Activated B cell treated with CpG ODN at 0.5 μM for 24 hours (primary cell): ENCODE measurements at regions of chr4 and their contacts with region 1.

Region 1: DNA sequence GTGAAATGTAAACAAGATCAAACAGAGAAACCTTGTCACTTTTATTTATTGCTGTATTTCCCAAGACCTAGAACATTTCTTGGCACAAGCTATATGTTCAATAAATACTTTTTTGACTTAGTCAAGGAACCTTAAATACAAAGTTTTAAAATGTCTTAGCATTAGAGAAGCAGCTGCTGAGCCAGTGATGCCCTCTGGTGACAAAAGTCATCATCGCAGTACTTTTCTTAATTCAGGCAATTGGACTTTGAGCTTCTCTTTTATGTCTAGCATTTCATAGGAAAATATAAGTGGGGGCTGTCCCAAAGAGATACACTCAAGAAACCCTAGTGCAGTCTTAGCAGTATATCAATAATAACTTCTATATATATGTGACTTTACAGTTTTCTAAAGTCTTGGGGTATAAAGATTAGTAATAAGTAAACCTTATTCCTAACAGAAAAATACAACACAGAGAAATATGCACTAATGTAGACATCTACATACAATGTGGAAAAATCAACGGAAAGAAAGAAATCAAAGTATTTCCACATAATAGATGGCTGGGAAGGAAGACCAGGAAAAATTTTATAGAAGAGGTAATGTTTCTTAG is 118.4 kb downstream of the DTHD1 start:
- DNase-seq: no peak
- ATAC-seq: peak; percentile 37
- H3K4me3 Mint-ChIP-seq: no peak overlapping the region
- H3K27ac Mint-ChIP-seq: no peak overlapping the region
- H3K4me1 Mint-ChIP-seq: no peaks in the 10 kb centered on the region
- H3K27me3 Mint-ChIP-seq: no peaks in the 10 kb centered on the region
- CTCF ChIP-seq: peak; percentile 87

Region 2: DNA sequence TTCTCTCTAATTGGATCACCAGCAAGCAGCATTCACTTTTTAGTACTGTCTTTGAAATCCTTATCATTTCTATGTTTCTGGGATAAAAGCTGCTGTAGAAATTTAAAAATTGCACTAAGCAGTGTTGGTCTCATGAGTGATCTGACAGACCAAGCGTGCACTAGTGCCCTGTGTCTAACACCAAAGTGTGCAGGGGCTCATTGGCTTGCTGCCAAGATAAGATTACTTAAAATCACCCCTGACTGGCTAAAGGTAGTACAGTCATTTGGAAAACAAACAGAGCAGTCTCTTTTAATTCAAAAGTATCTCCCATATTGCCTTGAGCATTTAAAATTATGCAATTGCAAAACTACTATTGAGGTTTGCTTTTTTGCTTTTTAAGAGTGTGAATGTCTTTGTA is 460.1 kb before region 1 on chr4:
- CTCF ChIA-PET with region 1: no interaction called
- POLR2A ChIA-PET with region 1: no interaction called
- intact Hi-C with region 1: loop called (anchors 10 kb)
- DNase-seq: no peak
- ATAC-seq: no peak
- H3K4me3 Mint-ChIP-seq: no peak overlapping the region
- H3K27ac Mint-ChIP-seq: no peak overlapping the region
- H3K4me1 Mint-ChIP-seq: no peaks in the 10 kb centered on the region
- H3K27me3 Mint-ChIP-seq: no peaks in the 10 kb centered on the region
- CTCF ChIP-seq: no peak

Region 3: GRCh38 chr4:36187723-36188333 is 212.0 kb before region 1 on chr4:
- CTCF ChIA-PET with region 1: interaction called, 40 read pairs
- POLR2A ChIA-PET with region 1: no interaction called
- intact Hi-C with region 1: loop called (anchors 1 kb)
- DNase-seq: no peak
- ATAC-seq: no peak
- H3K4me3 Mint-ChIP-seq: no peak overlapping the region
- H3K27ac Mint-ChIP-seq: no peak overlapping the region
- H3K4me1 Mint-ChIP-seq: peaks cover 23% of the 10 kb centered on the region
- H3K27me3 Mint-ChIP-seq: no peaks in the 10 kb centered on the region
- CTCF ChIP-seq: no peak

Region 4: GRCh38 chr4:36255577-36255976 is 144.3 kb before region 1 on chr4:
- CTCF ChIA-PET with region 1: interaction called, 12 read pairs
- POLR2A ChIA-PET with region 1: no interaction called
- intact Hi-C with region 1: no loop called
- DNase-seq: no peak
- ATAC-seq: peak; percentile 90
- H3K4me3 Mint-ChIP-seq: peak overlapping the region; percentile 81
- H3K27ac Mint-ChIP-seq: peak overlapping the region; percentile 95
- H3K4me1 Mint-ChIP-seq: peaks cover 32% of the 10 kb centered on the region
- H3K27me3 Mint-ChIP-seq: no peaks in the 10 kb centered on the region
- CTCF ChIP-seq: no peak

Region 5: DNA sequence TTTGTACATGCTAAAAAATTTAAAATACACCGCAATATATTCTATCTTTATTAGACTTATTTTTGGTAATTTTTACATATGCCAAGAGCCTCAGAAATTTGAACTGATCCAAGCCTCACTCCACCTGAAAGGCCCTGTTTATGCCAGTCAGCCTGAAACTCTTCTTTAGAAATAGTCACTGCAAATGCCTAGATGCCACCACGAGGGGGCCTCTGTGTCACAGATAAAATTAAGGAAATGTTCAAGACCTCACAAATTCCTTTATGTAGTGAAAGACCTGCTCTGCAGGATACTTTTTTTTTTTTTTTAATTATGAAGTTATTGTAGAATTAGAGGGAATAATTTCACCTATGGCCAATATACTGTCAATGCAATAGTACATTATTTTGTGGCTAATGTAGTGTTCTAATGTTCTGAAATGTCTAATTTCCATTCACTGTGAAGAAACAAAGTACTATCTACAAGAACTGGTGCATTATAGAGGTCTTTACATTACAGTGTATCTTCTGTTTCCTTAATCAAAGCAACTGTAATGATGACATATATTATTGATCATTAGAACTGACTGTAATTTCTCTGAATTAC is 48.7 kb before region 1 on chr4:
- CTCF ChIA-PET with region 1: interaction called, 49 read pairs
- POLR2A ChIA-PET with region 1: no interaction called
- intact Hi-C with region 1: loop called (anchors 1 kb)
- DNase-seq: peak; percentile 29
- ATAC-seq: peak; percentile 49
- H3K4me3 Mint-ChIP-seq: no peak overlapping the region
- H3K27ac Mint-ChIP-seq: no peak overlapping the region
- H3K4me1 Mint-ChIP-seq: peaks cover 22% of the 10 kb centered on the region
- H3K27me3 Mint-ChIP-seq: no peaks in the 10 kb centered on the region
- CTCF ChIP-seq: peak; percentile 91

Region 6: DNA sequence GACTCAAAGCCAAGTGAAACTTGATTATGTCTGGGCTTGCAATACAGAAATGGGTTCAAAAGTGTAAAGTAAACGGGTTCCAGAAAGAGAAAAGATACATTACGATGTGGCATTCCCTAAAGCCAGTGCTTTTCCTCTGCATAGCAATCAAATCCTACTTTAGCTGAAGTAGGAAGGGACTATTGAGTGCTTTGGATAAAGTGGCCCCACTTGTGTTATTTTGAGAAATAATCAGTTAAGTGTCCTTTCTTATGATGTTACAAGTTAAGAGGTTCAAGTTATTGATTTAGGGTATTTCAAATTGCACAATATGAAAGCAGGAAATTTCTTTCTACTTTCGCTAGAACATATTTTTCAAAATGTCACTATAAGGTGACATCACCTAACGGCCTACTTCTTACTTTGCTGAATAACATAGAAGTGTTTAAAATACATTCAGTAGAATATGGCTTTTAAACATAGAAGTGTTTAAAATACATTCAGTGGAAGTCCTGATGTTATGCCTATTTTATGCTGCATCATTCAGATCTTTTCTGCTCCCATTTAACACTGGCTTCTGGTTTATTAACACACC is 116.8 kb after region 1 on chr4:
- CTCF ChIA-PET with region 1: no interaction called
- POLR2A ChIA-PET with region 1: no interaction called
- intact Hi-C with region 1: no loop called
- DNase-seq: no peak
- ATAC-seq: no peak
- H3K4me3 Mint-ChIP-seq: no peak overlapping the region
- H3K27ac Mint-ChIP-seq: no peak overlapping the region
- H3K4me1 Mint-ChIP-seq: no peaks in the 10 kb centered on the region
- H3K27me3 Mint-ChIP-seq: no peaks in the 10 kb centered on the region
- CTCF ChIP-seq: no peak